ENCODE measurements at regions of chr7 and their contacts with region 1.

Region 1: GRCh38 chr7:138886501-138886917 is 88.5 kb upstream of the ATP6V0A4 start:
- DNase-seq: peak; percentile 47
- H3K4me3 Mint-ChIP-seq: no peak overlapping the region
- H3K27ac Mint-ChIP-seq: no peak overlapping the region
- H3K4me1 Mint-ChIP-seq: peaks cover 28% of the 10 kb centered on the region
- H3K27me3 Mint-ChIP-seq: peaks cover 7% of the 10 kb centered on the region

Region 2: DNA sequence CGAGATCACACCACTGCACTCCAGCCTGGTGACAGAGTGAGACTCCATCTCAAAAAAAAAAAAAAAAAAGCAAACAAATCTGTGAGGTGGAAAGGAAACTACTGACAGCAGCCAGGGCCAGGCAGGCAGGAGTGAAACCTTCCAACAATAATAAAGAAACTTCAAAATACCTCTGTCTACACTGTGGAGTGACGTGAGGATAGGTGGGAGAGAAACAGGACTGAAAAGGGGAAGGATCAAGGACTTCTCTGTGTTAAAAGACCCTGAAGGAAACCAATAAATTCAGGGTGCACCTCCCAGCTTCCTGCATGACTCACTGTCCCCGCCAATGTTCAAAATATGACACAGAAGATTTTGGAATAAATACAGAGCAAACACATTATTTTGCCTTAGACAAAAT is 11.7 kb after region 1 on chr7:
- intact Hi-C with region 1: loop called (anchors 1 kb)
- DNase-seq: no peak
- H3K4me3 Mint-ChIP-seq: peak overlapping the region; percentile 31
- H3K27ac Mint-ChIP-seq: peak overlapping the region; percentile 70
- H3K4me1 Mint-ChIP-seq: peaks cover 38% of the 10 kb centered on the region
- H3K27me3 Mint-ChIP-seq: peaks cover 27% of the 10 kb centered on the region

Region 3: DNA sequence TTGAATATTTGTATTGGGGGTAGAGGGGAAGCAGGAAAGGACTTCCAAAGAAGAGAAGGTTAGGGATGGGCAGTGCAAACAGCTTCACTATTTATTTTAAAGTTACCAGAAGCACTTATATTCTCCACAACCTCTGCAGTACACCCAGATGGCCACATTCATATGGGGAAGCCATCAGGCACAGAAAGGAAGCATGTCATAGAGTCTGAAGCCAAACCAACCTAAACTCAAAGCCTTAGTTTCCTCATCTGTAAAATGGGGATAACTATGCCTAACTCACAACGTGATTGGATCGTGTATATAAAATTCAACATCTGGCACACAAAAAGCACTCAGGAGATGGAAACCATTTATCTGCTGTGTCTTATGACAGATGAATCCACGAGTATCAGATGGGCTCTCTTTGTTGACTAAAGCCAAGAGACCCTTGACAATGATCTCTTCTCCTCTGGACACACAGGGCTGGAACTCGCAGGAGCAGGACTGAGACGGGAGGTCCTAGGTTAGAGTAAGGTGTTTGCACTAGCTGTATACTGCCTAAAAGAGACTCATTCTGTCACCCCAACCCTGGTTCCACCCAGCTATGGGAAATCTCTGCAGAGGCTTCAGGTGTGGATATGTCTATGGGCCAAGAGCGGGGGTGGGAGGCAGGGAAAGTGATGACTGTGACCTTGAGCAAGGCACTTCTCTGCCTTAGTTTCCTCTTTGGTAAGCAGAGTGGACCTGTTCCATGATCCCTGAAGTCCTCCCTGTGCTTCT is 92.9 kb after region 1 on chr7:
- intact Hi-C with region 1: loop called (anchors 1 kb)
- DNase-seq: no peak
- H3K4me3 Mint-ChIP-seq: peak overlapping the region; percentile 59
- H3K27ac Mint-ChIP-seq: no peak overlapping the region
- H3K4me1 Mint-ChIP-seq: peaks cover 9% of the 10 kb centered on the region
- H3K27me3 Mint-ChIP-seq: peaks cover 56% of the 10 kb centered on the region

Region 4: DNA sequence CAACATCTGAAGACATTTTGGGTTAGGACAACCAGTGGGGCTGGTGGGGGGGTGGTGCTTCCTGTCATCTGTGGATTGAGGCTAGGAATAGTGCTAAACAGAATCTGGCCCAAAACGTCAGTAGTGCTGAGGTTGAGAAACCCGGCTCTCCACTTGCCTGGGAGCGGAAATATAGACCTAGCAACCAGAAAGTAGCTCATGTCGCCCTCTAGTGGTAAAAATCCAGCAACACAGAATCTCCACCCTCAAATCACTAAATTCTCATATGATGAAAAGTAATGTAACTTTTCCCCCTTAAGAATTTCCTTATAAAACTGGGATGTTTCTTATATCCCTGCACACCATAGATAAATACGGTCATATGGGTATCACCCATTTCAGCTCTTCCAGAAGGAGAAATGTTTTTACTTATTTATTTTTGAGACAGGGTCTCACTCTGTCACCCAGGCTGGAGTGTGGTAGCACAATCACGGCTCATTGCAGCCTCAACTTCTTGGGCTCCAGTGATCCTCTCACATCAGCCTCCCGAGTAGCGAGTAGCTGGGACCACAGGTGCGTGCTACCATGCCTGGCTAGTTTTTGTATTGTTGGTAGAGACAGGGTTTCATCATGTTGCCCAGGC is 188.6 kb after region 1 on chr7:
- intact Hi-C with region 1: loop called (anchors 1 kb)
- DNase-seq: peak; percentile 62
- H3K4me3 Mint-ChIP-seq: peak overlapping the region; percentile 15
- H3K27ac Mint-ChIP-seq: peak overlapping the region; percentile 77
- H3K4me1 Mint-ChIP-seq: peaks cover 61% of the 10 kb centered on the region
- H3K27me3 Mint-ChIP-seq: no peaks in the 10 kb centered on the region

Measured in activated T-helper 1 cell treated with anti-CD3 and anti-CD28 coated beads, Interleukin-12 subunit alpha, Interleukin-12 subunit beta, Interleukin-2, Interleukin-4 antibody, amounts not matched to agents 30 ng/mL and 10 ng/mL and 1 ng/mL, durations not matched to agents 14 hours and 24 hours and 36 hours (primary cell).